ENCODE measurements at regions of chr4 and their contacts with region 1.

Region 1: GRCh38 chr4:38730830-38731646 is 51.8 kb downstream of the TLR10 start:
- DNase-seq: no peak
- H3K4me3 ChIP-seq: no peak overlapping the region
- H3K27ac ChIP-seq: no peak overlapping the region
- H3K4me1 ChIP-seq: peaks cover 7 to 10% (median 9%) of the 10 kb centered on the region in 4 donors
- H3K27me3 ChIP-seq: no peaks in the 10 kb centered on the region
- CTCF ChIP-seq: peak; percentile 91 to 97 (median 95)
- EP300 ChIP-seq: no peak
- POLR2A ChIP-seq: no peak

Region 2: GRCh38 chr4:38062088-38062893 is 668.7 kb before region 1 on chr4:
- intact Hi-C with region 1: loop called (anchors 5 kb)
- DNase-seq: peak; percentile 96
- H3K4me3 ChIP-seq: peak overlapping the region; percentile 28 to 46 (median 40)
- H3K27ac ChIP-seq: peak overlapping the region; percentile 22 to 63 (median 56)
- H3K4me1 ChIP-seq: peaks cover 4 to 37% (median 18%) of the 10 kb centered on the region in 4 donors
- H3K27me3 ChIP-seq: no peaks in the 10 kb centered on the region
- CTCF ChIP-seq: peak; percentile 72 to 84 (median 83)
- EP300 ChIP-seq: no peak
- POLR2A ChIP-seq: no peak

Region 3: DNA sequence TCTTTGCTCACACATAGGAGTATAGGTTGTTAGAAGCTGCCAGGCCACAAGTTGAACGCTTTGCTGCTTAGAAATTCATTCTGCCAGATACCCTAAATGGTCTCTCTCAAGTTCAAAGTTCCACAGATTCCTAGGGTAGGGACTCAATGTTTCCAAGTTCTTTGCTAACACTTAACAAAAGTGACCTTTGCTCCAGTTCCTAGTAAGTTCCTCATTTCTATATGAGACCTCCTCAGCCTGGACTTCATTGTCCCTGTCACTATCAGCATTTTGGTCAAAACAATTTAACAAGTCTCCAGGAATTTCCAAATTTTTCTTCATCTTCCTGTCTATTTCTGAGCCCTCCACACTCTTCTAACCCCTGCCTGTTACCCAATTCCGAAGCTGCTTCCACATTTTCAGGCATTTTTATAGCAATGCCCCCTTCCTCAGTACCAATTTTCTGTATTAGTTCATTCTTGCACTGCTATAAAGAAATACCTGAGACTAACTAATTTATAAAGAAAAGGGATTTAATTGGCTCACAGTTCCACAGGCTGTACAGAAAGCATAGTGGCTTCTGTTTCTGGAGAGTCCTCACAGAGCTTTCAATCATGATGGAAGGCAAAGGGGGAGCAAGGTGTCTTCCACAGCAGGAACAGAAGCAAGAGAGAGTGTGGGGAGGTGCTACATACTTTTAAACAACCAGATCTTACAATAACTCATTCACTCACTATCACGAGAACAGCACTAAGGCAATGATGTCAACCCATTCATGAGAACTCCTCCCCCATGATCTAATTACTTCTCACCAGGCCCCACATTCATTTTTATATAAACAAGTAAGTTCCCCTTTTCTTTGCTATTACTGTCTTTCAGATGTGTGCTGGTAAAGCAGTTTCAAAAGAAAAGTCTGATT is 85.1 kb after region 1 on chr4:
- intact Hi-C with region 1: no loop called
- DNase-seq: no peak
- H3K4me3 ChIP-seq: no peak overlapping the region
- H3K27ac ChIP-seq: peak overlapping the region in 2 of 4 donors; percentile 17 to 31
- H3K4me1 ChIP-seq: peaks cover 0 to 3% (median 0%) of the 10 kb centered on the region in 4 donors
- H3K27me3 ChIP-seq: no peaks in the 10 kb centered on the region
- CTCF ChIP-seq: no peak
- EP300 ChIP-seq: no peak
- POLR2A ChIP-seq: no peak